AG04450 (cell line): ENCODE measurements at regions of chr11 and their contacts with region 1.

Region 1: GRCh38 chr11:44927174-44927661 is 23.5 kb downstream of the TP53I11 start:
- DNase-seq: peak; percentile 39
- H3K4me3 ChIP-seq: no peak overlapping the region
- H3K27ac ChIP-seq: no peak overlapping the region
- H3K27me3 ChIP-seq: peaks cover 37% of the 10 kb centered on the region
- CTCF ChIP-seq: peak; percentile 86

Region 2: GRCh38 chr11:44943118-44943517 is 15.9 kb after region 1 on chr11:
- CTCF ChIA-PET with region 1: interaction called, 88 read pairs
- POLR2A ChIA-PET with region 1: no interaction called
- DNase-seq: no peak
- H3K4me3 ChIP-seq: no peak overlapping the region
- H3K27ac ChIP-seq: no peak overlapping the region
- H3K27me3 ChIP-seq: peaks cover 18% of the 10 kb centered on the region
- CTCF ChIP-seq: no peak

Region 3: GRCh38 chr11:44949160-44950030 is 22.2 kb after region 1 on chr11:
- CTCF ChIA-PET with region 1: interaction called, 12 read pairs
- POLR2A ChIA-PET with region 1: no interaction called
- DNase-seq: no peak
- H3K4me3 ChIP-seq: peak overlapping the region; percentile 71
- H3K27ac ChIP-seq: no peak overlapping the region
- H3K27me3 ChIP-seq: peaks cover 33% of the 10 kb centered on the region
- CTCF ChIP-seq: peak; percentile 51

Region 4: DNA sequence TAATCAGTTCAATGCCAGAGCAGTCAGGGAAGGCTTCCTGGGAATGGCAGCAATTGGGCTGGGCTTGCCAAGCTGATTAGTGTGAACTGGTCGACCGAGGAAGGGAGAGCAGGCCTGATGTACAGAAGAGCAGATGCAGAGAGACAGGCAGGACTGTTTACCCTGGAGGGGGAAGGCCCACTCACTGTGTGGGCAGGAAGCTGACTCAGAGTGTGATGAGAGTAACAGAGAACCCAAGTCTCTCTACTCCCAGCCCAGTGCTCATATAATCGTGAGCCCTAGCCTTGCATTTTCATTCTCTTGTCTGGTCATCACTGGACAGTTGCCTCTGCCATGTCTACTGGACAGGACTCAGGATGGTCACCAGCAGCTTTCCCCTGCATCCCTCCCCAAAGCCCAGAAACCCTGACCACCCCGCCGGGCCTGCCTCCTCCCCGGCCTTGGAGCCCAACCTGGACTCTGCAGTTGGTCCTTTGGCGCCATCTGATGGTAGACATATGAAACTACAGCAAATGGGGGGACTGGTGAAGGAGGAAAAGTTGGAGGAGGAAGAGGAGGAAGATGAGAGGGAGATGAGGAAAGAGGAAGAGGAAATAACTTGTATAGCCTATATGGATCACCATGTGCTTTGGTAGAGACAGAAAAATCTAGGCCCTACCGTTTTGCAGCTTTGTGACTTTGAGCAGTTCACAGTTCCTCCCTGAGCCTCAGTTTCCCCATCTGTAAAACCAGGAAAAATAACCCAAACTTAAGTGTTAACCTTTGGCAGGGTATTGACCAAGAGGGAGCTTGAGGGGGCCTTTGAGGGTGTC is 175.8 kb after region 1 on chr11:
- CTCF ChIA-PET with region 1: interaction called, 303 read pairs
- POLR2A ChIA-PET with region 1: interaction called, 7 read pairs
- DNase-seq: no peak
- H3K4me3 ChIP-seq: peak overlapping the region; percentile 21; the same call in 1 of the 2 replicates
- H3K27ac ChIP-seq: peak overlapping the region; percentile 11
- H3K27me3 ChIP-seq: peaks cover 30% of the 10 kb centered on the region
- CTCF ChIP-seq: peak; percentile 97